ENCODE measurements at regions of chr6 and their contacts with region 1.

Region 1: GRCh38 chr6:73520688-73521350 is at the start of gene EEF1A1:
- DNase-seq: peak; percentile 97 to 98
- ATAC-seq: peak; percentile 90 to 96 (median 93)
- H3K4me3 ChIP-seq: peak within 1 kb of the TSS; percentile 60 to 93 (median 80)
- H3K27ac ChIP-seq: peak within 1 kb of the TSS; percentile 93 to 100 (median 98)
- H3K4me1 ChIP-seq: peaks cover 0 to 63% (median 40%) of the 10 kb centered on the region in 9 donors
- H3K27me3 ChIP-seq: peaks cover 0 to 7% (median 0%) of the 10 kb centered on the region in 7 donors
- CTCF ChIP-seq: no peak
- total RNA-seq, gene EEF1A1: 988 to 2,538 (median 1,481) TPM

Region 2: GRCh38 chr6:73451223-73452107 is 69.4 kb before region 1 on chr6:
- intact Hi-C with region 1: loop called in 1 of 10 experiments (anchors 10 kb)
- DNase-seq: peak; percentile 35 to 46
- ATAC-seq: peak; percentile 64 to 78 (median 71)
- H3K4me3 ChIP-seq: peak overlapping the region; percentile 63 to 90 (median 76)
- H3K27ac ChIP-seq: peak overlapping the region; percentile 23 to 94 (median 86)
- H3K4me1 ChIP-seq: peaks cover 0 to 60% (median 14%) of the 10 kb centered on the region in 9 donors
- H3K27me3 ChIP-seq: peaks cover 0 to 12% (median 0%) of the 10 kb centered on the region in 7 donors
- CTCF ChIP-seq: peak in 1 of 9 donors; percentile 5

Region 3: GRCh38 chr6:73566954-73567591 is 46.3 kb after region 1 on chr6:
- intact Hi-C with region 1: loop called in 6 of 10 experiments (anchors 5 kb)
- DNase-seq: peak; percentile 38 to 71
- ATAC-seq: peak in 7 of 8 donors; percentile 61 to 90 (median 72)
- H3K4me3 ChIP-seq: no peak overlapping the region
- H3K27ac ChIP-seq: peak overlapping the region; percentile 27 to 84 (median 66)
- H3K4me1 ChIP-seq: peaks cover 0 to 22% (median 7%) of the 10 kb centered on the region in 9 donors
- H3K27me3 ChIP-seq: peaks cover 0 to 4% (median 0%) of the 10 kb centered on the region in 7 donors
- CTCF ChIP-seq: no peak

Region 4: GRCh38 chr6:73580247-73581149 is 59.7 kb after region 1 on chr6:
- intact Hi-C with region 1: loop called in 6 of 10 experiments (anchors 1 to 10 kb)
- DNase-seq: peak; percentile 71 to 82
- ATAC-seq: peak; percentile 89 to 96 (median 94)
- H3K4me3 ChIP-seq: peak overlapping the region in 8 of 10 donors; percentile 2 to 40 (median 34)
- H3K27ac ChIP-seq: peak overlapping the region; percentile 79 to 95 (median 88)
- H3K4me1 ChIP-seq: peaks cover 6 to 43% (median 18%) of the 10 kb centered on the region in 9 donors
- H3K27me3 ChIP-seq: no peaks in the 10 kb centered on the region
- CTCF ChIP-seq: peak in 8 of 9 donors; percentile 11 to 59 (median 48)

Region 5: DNA sequence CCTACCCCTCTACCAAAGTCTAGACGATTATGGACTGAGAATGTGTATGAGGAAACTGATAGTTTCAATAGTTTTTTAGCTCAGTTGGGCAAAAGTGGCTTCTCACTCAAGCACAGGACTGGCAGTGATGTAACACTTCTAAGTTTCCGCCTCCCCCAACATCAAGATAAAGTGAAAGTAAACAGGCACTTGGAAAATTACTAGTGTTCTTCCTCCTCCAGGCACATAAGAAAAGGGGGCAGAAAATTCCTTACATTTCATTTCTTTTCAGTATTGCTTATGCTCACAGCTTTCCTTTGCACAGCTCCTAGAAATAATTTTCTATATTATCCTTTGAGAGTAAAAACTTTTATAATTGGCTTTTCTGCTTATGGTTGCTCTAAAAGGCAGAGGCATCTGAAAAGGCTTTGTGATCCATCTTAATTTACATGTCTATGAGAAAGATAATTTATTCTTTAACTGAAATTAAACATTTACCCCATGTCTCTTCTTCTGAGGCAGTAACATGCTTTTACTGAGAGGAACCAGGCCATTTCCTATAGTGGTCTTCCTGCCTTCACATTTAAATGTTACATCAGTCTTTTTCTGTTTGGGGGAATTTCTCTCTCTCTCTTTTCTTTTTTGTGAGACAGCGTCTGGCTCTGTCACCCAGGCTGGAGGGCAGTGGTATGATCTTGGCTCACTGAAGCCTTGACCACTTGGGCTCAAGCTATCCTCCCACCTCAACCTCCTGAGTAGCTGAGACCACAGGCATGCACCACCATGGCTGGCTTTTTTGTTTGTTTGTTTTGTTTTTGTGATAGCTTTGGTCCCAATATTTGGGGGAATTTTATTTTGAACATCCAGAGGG is 65.0 kb after region 1 on chr6:
- intact Hi-C with region 1: loop called in 6 of 10 experiments (anchors 1 to 10 kb)
- DNase-seq: peak in 1 of 2 donors; percentile 67
- ATAC-seq: peak in 7 of 8 donors; percentile 67 to 89 (median 84)
- H3K4me3 ChIP-seq: peak overlapping the region in 7 of 10 donors; percentile 11 to 42 (median 23)
- H3K27ac ChIP-seq: peak overlapping the region; percentile 62 to 94 (median 84)
- H3K4me1 ChIP-seq: peaks cover 0 to 33% (median 20%) of the 10 kb centered on the region in 9 donors
- H3K27me3 ChIP-seq: no peaks in the 10 kb centered on the region
- CTCF ChIP-seq: no peak

Region 6: DNA sequence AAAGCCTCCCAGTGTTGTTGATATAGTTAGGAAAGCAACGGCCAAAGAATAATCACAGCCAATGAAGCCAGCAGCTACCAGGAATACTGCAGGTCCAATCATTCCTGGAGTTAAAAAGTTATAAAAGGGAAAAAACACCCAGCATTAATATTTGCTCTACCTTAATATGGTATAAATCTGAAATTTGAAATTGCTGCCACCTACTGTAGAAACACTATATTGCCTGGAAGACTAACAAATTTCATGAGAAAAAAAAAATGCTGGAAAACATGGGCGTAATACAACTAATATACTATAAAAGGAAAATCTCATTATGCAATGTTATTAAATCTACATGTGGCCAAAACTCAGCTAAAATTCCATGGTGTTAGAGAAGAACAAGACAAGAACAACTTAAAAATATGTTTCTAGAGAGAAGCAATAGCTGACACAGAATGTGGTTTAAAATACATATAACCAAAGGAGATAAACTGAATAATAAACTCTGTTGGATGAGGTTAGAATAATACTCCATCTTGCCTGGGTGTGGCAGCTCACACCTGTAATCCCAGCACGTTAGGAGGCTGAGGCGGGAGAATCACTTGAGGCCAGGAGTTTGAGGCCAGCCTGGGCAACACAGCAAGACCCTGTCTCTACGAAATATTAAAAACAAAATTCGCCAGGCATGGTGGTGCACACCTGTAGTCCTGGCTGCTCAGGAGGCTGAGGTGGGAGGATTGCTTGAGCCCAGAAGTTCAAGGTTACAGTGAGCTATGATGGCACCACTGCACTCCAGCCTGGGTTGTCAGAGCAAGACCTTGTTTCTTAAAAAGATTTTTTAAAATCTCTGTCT is 89.8 kb after region 1 on chr6:
- intact Hi-C with region 1: loop called in 6 of 10 experiments (anchors 1 to 5 kb)
- DNase-seq: no peak
- ATAC-seq: peak in 7 of 8 donors; percentile 42 to 67 (median 46)
- H3K4me3 ChIP-seq: no peak overlapping the region
- H3K27ac ChIP-seq: no peak overlapping the region
- H3K4me1 ChIP-seq: peaks cover 0 to 8% (median 0%) of the 10 kb centered on the region in 9 donors
- H3K27me3 ChIP-seq: no peaks in the 10 kb centered on the region
- CTCF ChIP-seq: peak; percentile 50 to 82 (median 72)

Region 7: GRCh38 chr6:73665686-73666319 is 145.0 kb after region 1 on chr6:
- intact Hi-C with region 1: no loop called
- DNase-seq: no peak
- ATAC-seq: no peak
- H3K4me3 ChIP-seq: no peak overlapping the region
- H3K27ac ChIP-seq: no peak overlapping the region
- H3K4me1 ChIP-seq: peaks cover 0 to 5% (median 0%) of the 10 kb centered on the region in 9 donors
- H3K27me3 ChIP-seq: peaks cover 0 to 7% (median 0%) of the 10 kb centered on the region in 7 donors
- CTCF ChIP-seq: no peak

Region 8: DNA sequence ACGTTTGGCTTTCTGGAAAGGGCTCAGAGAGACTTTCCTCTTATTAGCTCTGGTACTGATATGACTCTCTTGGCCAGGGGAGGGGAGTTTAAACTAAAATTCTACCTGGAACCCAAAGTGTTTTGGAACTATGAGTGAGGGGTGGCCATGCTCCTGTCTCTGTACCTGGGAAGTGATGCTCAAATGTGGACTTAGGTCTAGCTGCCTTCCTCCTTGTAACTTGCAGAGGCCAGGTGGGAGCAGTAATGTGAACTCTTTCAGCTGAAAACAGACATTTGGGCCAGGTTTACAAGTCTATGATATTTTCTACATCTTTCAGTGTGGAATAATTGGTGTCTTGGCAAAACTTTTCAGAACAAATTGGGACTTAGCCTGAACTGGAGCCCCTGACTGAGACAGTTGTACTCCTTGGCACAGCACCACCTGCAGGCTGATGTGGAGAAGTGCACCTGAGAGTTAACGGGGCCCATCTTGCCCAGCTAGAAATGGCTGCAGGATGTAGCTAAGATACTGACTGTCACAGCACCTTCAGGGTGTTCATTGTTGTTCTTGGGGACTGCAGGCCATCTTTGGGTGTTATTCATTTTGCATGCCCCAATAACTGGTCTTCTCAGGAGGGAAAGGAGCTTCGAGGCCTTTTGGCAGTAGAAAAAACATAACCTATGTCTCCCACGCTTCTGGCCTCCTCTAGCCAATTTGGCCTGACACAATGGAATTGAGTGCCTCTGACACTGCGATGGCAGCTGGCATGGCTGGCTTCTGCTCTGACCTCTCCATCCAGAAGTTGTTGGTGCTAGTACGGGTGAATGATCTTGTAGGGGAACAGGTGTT is 212.2 kb after region 1 on chr6:
- intact Hi-C with region 1: loop called in 2 of 10 experiments (anchors 5 to 10 kb)
- DNase-seq: peak; percentile 50 to 70
- ATAC-seq: peak; percentile 84 to 92 (median 90)
- H3K4me3 ChIP-seq: no peak overlapping the region
- H3K27ac ChIP-seq: no peak overlapping the region
- H3K4me1 ChIP-seq: peaks cover 0 to 2% (median 0%) of the 10 kb centered on the region in 9 donors
- H3K27me3 ChIP-seq: no peaks in the 10 kb centered on the region
- CTCF ChIP-seq: peak; percentile 82 to 95 (median 91)

Measured in heart right ventricle (tissue), 16 donors.